Activated CD8-positive, alpha-beta memory T cell treated with anti-CD3 and anti-CD28 coated beads, Interleukin-2, amount 10 ng/mL, durations not matched to agents 7 days and 5 days (primary cell): ENCODE measurements at regions of chr12 and their contacts with region 1.

Region 1: GRCh38 chr12:54191550-54192022 is 2.8 kb upstream of the SMUG1 start:
- DNase-seq: peak; percentile 82
- ATAC-seq: peak; percentile 54
- H3K4me3 Mint-ChIP-seq: no peak overlapping the region
- H3K27ac Mint-ChIP-seq: no peak overlapping the region
- H3K4me1 Mint-ChIP-seq: peaks cover 21% of the 10 kb centered on the region
- H3K27me3 Mint-ChIP-seq: peaks cover 53% of the 10 kb centered on the region

Region 2: DNA sequence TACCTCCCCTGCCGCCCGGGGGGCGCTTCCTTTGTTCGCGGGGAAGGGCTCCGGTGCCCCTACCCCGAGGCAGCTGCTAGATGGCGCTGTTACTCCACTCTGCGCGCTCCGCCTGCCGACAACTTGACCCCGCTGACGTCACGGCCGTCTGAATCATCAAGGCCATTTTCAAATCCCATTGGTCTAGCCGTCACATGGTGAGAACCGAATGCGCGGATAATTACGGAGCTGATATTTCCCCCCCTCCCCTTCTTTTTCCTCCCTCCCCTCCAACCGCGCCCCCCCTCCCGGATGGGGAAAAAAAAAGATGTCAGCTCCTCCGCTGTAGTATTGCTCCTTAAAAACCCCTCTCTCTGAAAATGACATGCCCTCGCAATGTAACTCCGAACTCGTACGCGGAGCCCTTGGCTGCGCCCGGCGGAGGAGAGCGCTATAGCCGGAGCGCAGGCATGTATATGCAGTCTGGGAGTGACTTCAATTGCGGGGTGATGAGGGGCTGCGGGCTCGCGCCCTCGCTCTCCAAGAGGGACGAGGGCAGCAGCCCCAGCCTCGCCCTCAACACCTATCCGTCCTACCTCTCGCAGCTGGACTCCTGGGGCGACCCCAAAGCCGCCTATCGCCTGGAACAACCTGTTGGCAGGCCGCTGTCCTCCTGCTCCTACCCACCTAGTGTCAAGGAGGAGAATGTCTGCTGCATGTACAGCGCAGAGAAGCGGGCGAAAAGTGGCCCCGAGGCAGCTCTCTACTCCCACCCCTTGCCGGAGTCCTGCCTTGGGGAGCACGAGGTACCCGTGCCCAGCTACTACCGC is 206.5 kb before region 1 on chr12 and contains the start of gene HOXC10:
- CTCF ChIA-PET with region 1: interaction called, 19 read pairs
- DNase-seq: peak; percentile 89
- ATAC-seq: peak; percentile 67
- H3K4me3 Mint-ChIP-seq: no peak within 1 kb of the TSS
- H3K27ac Mint-ChIP-seq: peak within 1 kb of the TSS; percentile 28
- H3K4me1 Mint-ChIP-seq: peaks cover 24% of the 10 kb centered on the region
- H3K27me3 Mint-ChIP-seq: peaks cover 97% of the 10 kb centered on the region
- total RNA-seq, gene HOXC10: not detected

Region 3: DNA sequence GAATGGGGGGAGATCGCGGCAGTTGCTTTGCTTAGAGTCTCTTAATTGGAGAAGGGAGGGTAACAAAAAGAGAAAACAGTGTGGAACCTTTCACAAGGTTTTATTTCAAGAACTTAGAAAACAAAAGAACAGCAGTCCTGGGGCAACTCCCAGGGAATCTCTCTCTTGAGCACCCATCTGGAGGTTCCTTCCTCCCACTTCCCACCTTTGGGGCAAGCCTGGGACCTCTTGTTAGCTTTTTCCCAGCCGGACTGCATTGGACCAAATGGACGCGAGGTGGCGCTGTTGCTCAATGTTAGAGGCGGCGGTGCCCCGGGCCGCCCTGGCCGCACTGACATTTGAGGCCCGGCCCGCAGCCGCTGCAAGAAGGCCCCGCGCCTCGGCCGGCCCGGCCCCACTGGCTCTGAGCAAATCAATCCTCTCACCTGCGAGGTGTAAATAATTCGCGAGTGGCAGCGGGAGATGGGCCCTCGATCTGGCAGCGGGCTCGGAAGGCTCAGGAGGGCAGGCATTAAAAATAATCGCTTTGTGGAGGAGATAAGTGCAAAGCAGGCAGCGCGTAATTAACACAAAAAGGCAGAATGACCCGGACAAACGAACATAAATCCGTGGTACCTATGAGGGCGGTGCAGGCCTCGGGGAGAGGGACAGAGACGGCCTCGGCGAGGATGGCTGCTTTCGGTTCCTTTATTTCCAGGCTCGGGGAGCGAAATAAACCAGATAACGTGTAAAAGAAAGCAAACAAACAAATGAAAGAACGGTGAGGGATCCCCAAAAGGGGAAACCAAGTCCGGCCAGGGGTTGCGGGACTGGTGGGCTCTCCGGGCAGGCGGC is 185.5 kb before region 1 on chr12:
- CTCF ChIA-PET with region 1: interaction called, 136 read pairs
- DNase-seq: peak; percentile 87
- ATAC-seq: peak; percentile 88
- H3K4me3 Mint-ChIP-seq: peak overlapping the region; percentile 64
- H3K27ac Mint-ChIP-seq: no peak overlapping the region
- H3K4me1 Mint-ChIP-seq: peaks cover 15% of the 10 kb centered on the region
- H3K27me3 Mint-ChIP-seq: peaks cover 95% of the 10 kb centered on the region

Region 4: GRCh38 chr12:54039417-54040147 is 152.0 kb before region 1 on chr12:
- CTCF ChIA-PET with region 1: interaction called, 229 read pairs
- DNase-seq: no peak
- ATAC-seq: no peak
- H3K4me3 Mint-ChIP-seq: no peak overlapping the region
- H3K27ac Mint-ChIP-seq: no peak overlapping the region
- H3K4me1 Mint-ChIP-seq: peaks cover 13% of the 10 kb centered on the region
- H3K27me3 Mint-ChIP-seq: peaks cover 91% of the 10 kb centered on the region

Region 5: GRCh38 chr12:54214553-54215406 is 23.2 kb after region 1 on chr12:
- CTCF ChIA-PET with region 1: interaction called, 87 read pairs
- DNase-seq: peak; percentile 95
- ATAC-seq: peak; percentile 90
- H3K4me3 Mint-ChIP-seq: peak overlapping the region; percentile 61
- H3K27ac Mint-ChIP-seq: peak overlapping the region; percentile 18
- H3K4me1 Mint-ChIP-seq: peaks cover 36% of the 10 kb centered on the region
- H3K27me3 Mint-ChIP-seq: peaks cover 7% of the 10 kb centered on the region